ENCODE measurements at regions of chr4 and their contacts with region 1.

Region 1: GRCh38 chr4:31124008-31124585 is 403.9 kb downstream of the PCDH7 start:
- DNase-seq: no peak
- ATAC-seq: no peak
- H3K4me3 ChIP-seq: no peak overlapping the region
- H3K4me3 Mint-ChIP-seq: no peak overlapping the region
- H3K27ac ChIP-seq: no peak overlapping the region
- H3K27ac Mint-ChIP-seq: no peak overlapping the region
- H3K4me1 ChIP-seq: no peaks in the 10 kb centered on the region
- H3K4me1 Mint-ChIP-seq: no peaks in the 10 kb centered on the region
- H3K27me3 ChIP-seq: no peaks in the 10 kb centered on the region
- H3K27me3 Mint-ChIP-seq: no peaks in the 10 kb centered on the region

Region 2: GRCh38 chr4:30716158-30716557 is 407.9 kb before region 1 on chr4:
- CTCF ChIA-PET with region 1: no interaction called
- POLR2A ChIA-PET with region 1: interaction called in 1 of 2 experiments, 12 read pairs
- DNase-seq: no peak
- ATAC-seq: no peak
- H3K4me3 ChIP-seq: no peak overlapping the region
- H3K4me3 Mint-ChIP-seq: peak overlapping the region; percentile 57 to 80 (median 60)
- H3K27ac ChIP-seq: no peak overlapping the region
- H3K27ac Mint-ChIP-seq: no peak overlapping the region
- H3K4me1 ChIP-seq: peaks cover 6 to 36% of the 10 kb centered on the region in 2 experiments
- H3K4me1 Mint-ChIP-seq: peaks cover 31 to 40% (median 33%) of the 10 kb centered on the region in 3 donors
- H3K27me3 ChIP-seq: peaks cover 6 to 42% of the 10 kb centered on the region in 2 experiments
- H3K27me3 Mint-ChIP-seq: peaks cover 34 to 48% of the 10 kb centered on the region in 2 donors

Region 3: DNA sequence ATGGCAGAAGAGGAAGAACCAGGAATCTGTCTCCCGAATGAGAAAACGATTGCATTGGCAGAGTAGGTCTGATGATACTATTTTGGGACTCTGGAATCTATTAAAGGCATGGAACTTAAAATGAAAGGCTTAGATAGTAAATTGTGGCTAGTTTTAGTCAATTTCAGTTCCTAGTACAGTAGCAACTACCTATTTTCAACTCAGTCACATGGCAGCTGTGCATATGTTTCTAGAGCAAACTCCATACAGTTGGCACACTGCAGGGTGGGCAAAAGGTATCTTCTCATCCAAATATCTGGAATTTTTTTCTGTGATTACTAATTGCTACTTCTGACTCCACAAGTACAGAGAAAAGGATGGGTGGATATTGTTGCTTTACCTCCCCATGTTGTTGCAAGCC is 259.7 kb after region 1 on chr4:
- CTCF ChIA-PET with region 1: no interaction called
- POLR2A ChIA-PET with region 1: no interaction called
- DNase-seq: no peak
- ATAC-seq: no peak
- H3K4me3 ChIP-seq: no peak overlapping the region
- H3K4me3 Mint-ChIP-seq: no peak overlapping the region
- H3K27ac ChIP-seq: no peak overlapping the region
- H3K27ac Mint-ChIP-seq: no peak overlapping the region
- H3K4me1 ChIP-seq: no peaks in the 10 kb centered on the region
- H3K4me1 Mint-ChIP-seq: no peaks in the 10 kb centered on the region
- H3K27me3 ChIP-seq: no peaks in the 10 kb centered on the region
- H3K27me3 Mint-ChIP-seq: no peaks in the 10 kb centered on the region